Activated CD4-positive, alpha-beta T cell treated with anti-CD3 and anti-CD28 coated beads for 36 hours (primary cell): ENCODE measurements at regions of chr17 and their contacts with region 1.

Region 1: GRCh38 chr17:8935191-8935590 is 30.3 kb downstream of the PIK3R5 start:
- DNase-seq: peak; percentile 89
- ATAC-seq: peak; percentile 80
- H3K4me3 Mint-ChIP-seq: peak overlapping the region; percentile 42
- H3K27ac Mint-ChIP-seq: peak overlapping the region; percentile 94
- H3K4me1 Mint-ChIP-seq: peaks cover 66% of the 10 kb centered on the region
- H3K27me3 Mint-ChIP-seq: no peaks in the 10 kb centered on the region

Region 2: GRCh38 chr17:8857919-8858318 is 77.3 kb before region 1 on chr17:
- CTCF ChIA-PET with region 1: no interaction called
- POLR2A ChIA-PET with region 1: no interaction called
- intact Hi-C with region 1: loop called (anchors 1 to 2 kb)
- DNase-seq: peak; percentile 81
- ATAC-seq: peak; percentile 70
- H3K4me3 Mint-ChIP-seq: peak overlapping the region; percentile 6
- H3K27ac Mint-ChIP-seq: peak overlapping the region; percentile 80
- H3K4me1 Mint-ChIP-seq: peaks cover 54% of the 10 kb centered on the region
- H3K27me3 Mint-ChIP-seq: no peaks in the 10 kb centered on the region

Region 3: GRCh38 chr17:8949061-8949661 is 14.0 kb after region 1 on chr17:
- CTCF ChIA-PET with region 1: interaction called, 32 read pairs
- POLR2A ChIA-PET with region 1: interaction called, 12 read pairs
- intact Hi-C with region 1: loop called (anchors 1 kb)
- DNase-seq: peak; percentile 62
- ATAC-seq: peak; percentile 75
- H3K4me3 Mint-ChIP-seq: peak overlapping the region; percentile 61
- H3K27ac Mint-ChIP-seq: peak overlapping the region; percentile 79
- H3K4me1 Mint-ChIP-seq: peaks cover 86% of the 10 kb centered on the region
- H3K27me3 Mint-ChIP-seq: no peaks in the 10 kb centered on the region

Region 4: GRCh38 chr17:9484789-9485188 is 549.6 kb after region 1 on chr17:
- CTCF ChIA-PET with region 1: no interaction called
- POLR2A ChIA-PET with region 1: no interaction called
- intact Hi-C with region 1: no loop called
- DNase-seq: no peak
- ATAC-seq: no peak
- H3K4me3 Mint-ChIP-seq: no peak overlapping the region
- H3K27ac Mint-ChIP-seq: no peak overlapping the region
- H3K4me1 Mint-ChIP-seq: no peaks in the 10 kb centered on the region
- H3K27me3 Mint-ChIP-seq: no peaks in the 10 kb centered on the region